ENCODE measurements at regions of chr3 and their contacts with region 1.

Region 1: DNA sequence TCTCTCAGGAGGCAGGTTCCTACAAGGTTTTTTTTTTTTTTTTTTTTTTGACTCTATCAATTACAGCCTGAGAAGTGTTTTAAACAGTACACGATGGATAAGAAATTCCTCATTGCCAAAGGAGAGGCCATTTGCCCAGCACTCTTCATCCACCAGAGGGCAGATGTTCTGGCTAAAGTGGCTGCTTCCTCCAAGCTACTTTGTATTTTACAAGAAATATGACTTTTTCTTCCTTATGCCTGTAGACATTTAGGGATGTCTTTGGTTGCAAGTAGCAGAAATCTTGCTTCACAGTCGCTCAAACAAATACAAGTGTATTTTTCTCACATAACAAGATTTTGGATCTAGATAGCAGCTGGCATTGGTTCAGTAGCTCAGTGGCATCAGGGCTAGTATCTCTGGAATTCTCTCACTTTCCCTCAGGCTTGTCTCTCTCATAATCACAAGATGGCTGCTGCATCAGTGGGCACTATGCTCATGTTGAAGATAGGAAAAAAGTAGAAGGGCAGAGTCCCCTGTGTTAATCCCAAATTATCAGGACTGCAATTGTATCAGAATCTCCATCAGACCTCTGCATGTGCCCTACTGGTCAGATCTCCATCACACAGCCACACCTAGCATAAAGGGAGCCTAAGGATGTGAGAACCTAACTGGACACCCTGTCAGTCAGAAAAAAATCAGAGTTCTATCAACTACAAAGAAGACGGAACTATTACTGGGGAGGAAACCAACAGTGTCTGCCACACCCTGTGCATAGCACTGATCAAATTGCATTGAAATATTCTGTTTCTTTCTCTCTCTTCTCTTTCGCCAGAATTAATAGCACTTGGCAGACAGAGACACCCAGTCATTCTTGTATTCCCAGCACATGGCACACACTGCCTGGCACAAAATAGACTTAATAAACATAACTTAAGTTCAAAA is 138.9 kb upstream of the COL8A1 start:
- DNase-seq: no peak
- H3K4me3 ChIP-seq: peak overlapping the region in 1 of 2 donors; percentile 1
- H3K27ac ChIP-seq: peak overlapping the region; percentile 72 to 87
- H3K4me1 ChIP-seq: peaks cover 10 to 39% of the 10 kb centered on the region in 2 donors
- H3K27me3 ChIP-seq: no peaks in the 10 kb centered on the region
- CTCF ChIP-seq: peak; percentile 23 to 65 (median 59)

Region 2: DNA sequence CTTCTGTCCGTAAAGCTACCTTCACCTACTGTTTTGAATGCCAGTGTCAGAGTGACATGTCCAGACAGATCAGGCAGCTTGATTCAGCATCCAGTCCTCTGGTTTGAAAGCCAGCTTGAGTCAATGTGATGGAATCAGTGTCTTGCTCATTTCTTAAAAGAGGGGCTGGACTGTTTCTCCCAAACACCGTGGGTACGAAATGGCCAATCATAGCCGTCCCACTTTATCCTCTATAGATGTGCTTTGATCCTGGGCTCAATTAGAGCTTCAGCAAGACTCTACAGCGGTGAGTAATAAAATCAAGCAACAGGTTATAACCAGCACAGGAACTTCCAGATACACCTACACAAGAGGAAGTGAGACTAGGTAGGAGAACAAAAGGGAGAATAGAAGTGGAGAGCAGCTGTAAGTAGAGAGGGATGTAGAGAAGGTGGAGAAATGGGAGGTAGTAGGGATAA is 1053.5 kb before region 1 on chr3:
- intact Hi-C with region 1: no loop called
- DNase-seq: no peak
- H3K4me3 ChIP-seq: no peak overlapping the region
- H3K27ac ChIP-seq: no peak overlapping the region
- H3K4me1 ChIP-seq: no peaks in the 10 kb centered on the region
- H3K27me3 ChIP-seq: no peaks in the 10 kb centered on the region
- CTCF ChIP-seq: no peak

Region 3: GRCh38 chr3:99473321-99473751 is 26.2 kb before region 1 on chr3:
- intact Hi-C with region 1: loop called (anchors 2 kb)
- DNase-seq: no peak
- H3K4me3 ChIP-seq: no peak overlapping the region
- H3K27ac ChIP-seq: peak overlapping the region; percentile 81 to 91
- H3K4me1 ChIP-seq: peaks cover 6 to 14% of the 10 kb centered on the region in 2 donors
- H3K27me3 ChIP-seq: no peaks in the 10 kb centered on the region
- CTCF ChIP-seq: no peak

Region 4: DNA sequence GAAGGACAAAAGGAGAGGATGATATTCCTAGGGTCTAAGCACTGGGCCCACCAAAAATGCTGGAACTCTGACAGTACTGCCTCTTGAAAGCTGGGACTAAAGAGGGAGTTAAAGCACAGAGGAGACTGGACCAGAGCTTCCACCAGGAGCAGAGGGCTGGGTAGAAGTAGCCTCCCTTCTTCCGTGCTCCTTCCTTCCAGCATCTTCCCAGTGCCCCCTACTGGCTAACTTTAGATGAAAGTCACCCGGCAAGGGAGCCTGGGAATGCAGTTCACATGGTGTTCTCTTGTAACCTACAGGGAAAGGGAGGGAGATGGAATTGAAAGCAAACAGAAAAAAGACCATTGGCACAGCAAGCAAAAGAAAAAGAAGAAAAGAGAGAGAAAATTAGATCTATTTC is 32.7 kb after region 1 on chr3:
- intact Hi-C with region 1: loop called (anchors 5 kb)
- DNase-seq: no peak
- H3K4me3 ChIP-seq: no peak overlapping the region
- H3K27ac ChIP-seq: no peak overlapping the region
- H3K4me1 ChIP-seq: peaks cover 0 to 18% of the 10 kb centered on the region in 2 donors
- H3K27me3 ChIP-seq: no peaks in the 10 kb centered on the region
- CTCF ChIP-seq: peak; percentile 28 to 52 (median 43)

Region 5: DNA sequence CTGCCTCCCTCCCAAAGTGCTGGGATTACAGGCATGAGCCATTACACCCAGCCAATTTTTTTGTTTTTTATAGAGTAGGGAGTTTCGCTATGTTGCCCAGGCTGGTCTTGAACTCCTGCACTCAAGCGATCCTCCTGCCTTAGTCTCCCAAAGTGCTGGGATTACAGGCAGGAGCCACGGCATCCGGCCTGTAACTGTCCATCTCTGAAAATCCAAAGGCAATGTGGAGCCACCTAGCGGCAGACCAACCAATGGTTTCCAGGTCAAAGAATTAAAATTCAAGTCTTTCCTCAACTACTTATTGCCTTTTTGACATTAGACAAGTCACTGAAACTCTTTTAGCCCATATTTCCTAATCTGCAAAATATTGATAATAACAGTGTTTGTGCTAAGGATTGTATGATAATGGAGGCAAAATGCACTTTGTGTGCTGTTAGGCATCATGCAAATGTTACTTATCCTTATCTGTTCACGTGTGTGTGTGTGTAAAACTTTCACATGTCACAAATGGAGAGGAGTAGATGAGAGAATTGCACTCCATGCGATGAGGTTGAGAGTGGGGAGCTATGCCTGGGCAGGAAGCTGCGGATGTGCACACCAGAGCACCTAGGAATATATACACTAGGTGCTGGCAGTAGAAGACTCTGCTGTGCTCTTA is 187.6 kb after region 1 on chr3:
- intact Hi-C with region 1: loop called (anchors 5 kb)
- DNase-seq: peak in 1 of 2 donors; percentile 74
- H3K4me3 ChIP-seq: no peak overlapping the region
- H3K27ac ChIP-seq: peak overlapping the region; percentile 21 to 50
- H3K4me1 ChIP-seq: peaks cover 0 to 29% of the 10 kb centered on the region in 2 donors
- H3K27me3 ChIP-seq: no peaks in the 10 kb centered on the region
- CTCF ChIP-seq: peak; percentile 58 to 64 (median 61)